ENCODE measurements at regions of chr21 and their contacts with region 1.

Region 1: DNA sequence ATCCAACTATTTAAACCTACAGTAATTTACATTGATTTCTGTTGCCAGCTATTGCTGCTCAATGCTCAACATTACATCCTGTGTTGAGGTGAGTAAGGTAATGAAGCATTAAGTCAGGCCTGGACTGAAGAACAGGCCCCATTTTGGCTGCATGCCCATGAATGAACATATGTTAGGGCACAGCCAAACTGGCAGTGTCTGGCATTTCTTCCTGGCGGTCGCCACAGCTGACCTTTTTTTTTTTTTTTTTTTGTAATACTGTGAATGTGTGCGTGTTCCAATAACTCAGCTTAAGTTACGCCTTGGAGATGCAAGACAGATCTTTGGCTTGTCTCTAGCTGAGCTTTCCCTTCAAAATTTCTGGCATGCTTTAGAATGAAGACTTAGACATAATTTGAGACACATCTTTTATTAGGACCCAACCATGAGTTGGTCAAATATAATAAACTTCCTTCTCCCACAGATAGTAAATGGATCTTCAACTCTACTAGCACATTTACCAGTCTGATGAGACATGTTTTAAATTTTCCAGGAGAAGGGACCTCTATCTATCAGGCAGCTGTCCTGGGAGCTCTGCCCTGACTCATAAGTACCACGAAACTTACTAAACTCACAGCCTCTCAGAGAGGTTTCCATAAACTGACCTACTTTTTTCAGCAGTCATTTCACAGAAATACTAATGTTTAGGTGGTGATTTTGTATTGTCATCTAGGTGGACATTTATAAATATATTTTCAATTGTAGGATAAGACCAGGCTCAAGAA is 341.1 kb upstream of the RUNX1 start:
- H3K4me3 ChIP-seq: no peak overlapping the region
- H3K27ac ChIP-seq: no peak overlapping the region
- H3K4me1 ChIP-seq: no peaks in the 10 kb centered on the region
- CTCF ChIP-seq: no peak

Region 2: GRCh38 chr21:35400233-35400957 is 10.2 kb after region 1 on chr21:
- CTCF ChIA-PET with region 1: interaction called, 11 read pairs
- POLR2A ChIA-PET with region 1: no interaction called
- H3K4me3 ChIP-seq: no peak overlapping the region
- H3K27ac ChIP-seq: no peak overlapping the region
- H3K4me1 ChIP-seq: no peaks in the 10 kb centered on the region
- CTCF ChIP-seq: peak; percentile 24; the same call in 1 of the 2 replicates

Region 3: DNA sequence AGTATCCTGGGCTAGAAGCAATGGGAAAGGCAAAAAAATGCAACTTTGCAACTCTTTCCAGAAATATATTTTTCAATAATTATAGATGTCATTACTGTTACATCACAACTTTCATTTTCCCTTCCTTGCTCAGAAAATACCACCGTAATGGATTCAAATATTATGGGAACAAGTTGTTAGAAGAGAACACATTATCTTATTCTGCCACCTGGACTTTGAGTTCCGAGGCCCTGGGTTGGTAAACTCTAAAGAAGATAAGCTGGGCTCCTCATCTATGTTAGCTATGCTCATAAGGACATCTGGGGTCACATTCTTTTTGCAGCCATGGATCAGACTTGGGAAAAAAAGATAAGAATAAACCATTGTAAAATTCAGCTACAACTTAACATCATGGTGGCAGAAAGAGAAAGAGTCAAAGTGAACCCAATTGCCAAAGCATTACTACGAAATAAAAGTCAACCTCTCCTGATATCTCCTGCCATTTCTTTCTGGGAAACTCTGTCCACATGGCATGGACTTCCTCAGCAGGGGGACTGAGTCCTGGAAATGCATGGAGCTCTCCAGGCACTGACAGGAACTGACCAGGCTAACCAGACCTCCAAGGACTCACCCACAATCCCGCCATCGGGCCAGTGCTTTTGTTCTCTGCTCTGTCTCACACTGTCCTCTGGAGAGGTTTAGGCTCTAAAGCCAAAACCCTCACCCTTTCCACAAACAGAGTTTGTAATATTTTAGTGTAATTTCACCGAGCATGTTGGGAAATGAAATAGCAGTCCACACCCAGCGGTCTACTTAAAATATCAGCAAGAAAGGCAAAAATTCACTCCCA is 158.0 kb after region 1 on chr21:
- CTCF ChIA-PET with region 1: no interaction called
- POLR2A ChIA-PET with region 1: no interaction called
- H3K4me3 ChIP-seq: no peak overlapping the region
- H3K27ac ChIP-seq: no peak overlapping the region
- H3K4me1 ChIP-seq: no peaks in the 10 kb centered on the region
- CTCF ChIP-seq: no peak

Measured in HEK293 (cell line).